Activated CD4-positive, alpha-beta memory T cell treated with anti-CD3 and anti-CD28 coated beads for 36 hours (primary cell): ENCODE measurements at regions of chr19 and their contacts with region 1.

Region 1: GRCh38 chr19:29966588-29967249 is 24.7 kb downstream of the URI1 start:
- DNase-seq: no peak
- H3K4me3 Mint-ChIP-seq: no peak overlapping the region
- H3K27ac Mint-ChIP-seq: no peak overlapping the region
- H3K4me1 Mint-ChIP-seq: peaks cover 72% of the 10 kb centered on the region
- H3K27me3 Mint-ChIP-seq: no peaks in the 10 kb centered on the region

Region 2: GRCh38 chr19:29953352-29954247 is 13.1 kb before region 1 on chr19:
- CTCF ChIA-PET with region 1: interaction called, 3 read pairs
- POLR2A ChIA-PET with region 1: interaction called, 3 read pairs
- intact Hi-C with region 1: loop called (anchors 2 kb)
- DNase-seq: no peak
- H3K4me3 Mint-ChIP-seq: no peak overlapping the region
- H3K27ac Mint-ChIP-seq: peak overlapping the region; percentile 64
- H3K4me1 Mint-ChIP-seq: peaks cover 60% of the 10 kb centered on the region
- H3K27me3 Mint-ChIP-seq: no peaks in the 10 kb centered on the region

Region 3: GRCh38 chr19:29978080-29978479 is 11.4 kb after region 1 on chr19:
- CTCF ChIA-PET with region 1: interaction called, 11 read pairs
- POLR2A ChIA-PET with region 1: interaction called, 3 read pairs
- intact Hi-C with region 1: no loop called
- DNase-seq: no peak
- H3K4me3 Mint-ChIP-seq: no peak overlapping the region
- H3K27ac Mint-ChIP-seq: no peak overlapping the region
- H3K4me1 Mint-ChIP-seq: peaks cover 45% of the 10 kb centered on the region
- H3K27me3 Mint-ChIP-seq: no peaks in the 10 kb centered on the region